ENCODE measurements at regions of chr20 and their contacts with region 1.

Region 1: GRCh38 chr20:6767536-6768227 is at the start of gene BMP2:
- DNase-seq: peak in 1 of 2 donors; percentile 72
- H3K4me3 ChIP-seq: peak within 1 kb of the TSS; percentile 86 to 87
- H3K27ac ChIP-seq: peak within 1 kb of the TSS; percentile 76 to 89
- H3K4me1 ChIP-seq: peaks cover 3 to 8% of the 10 kb centered on the region in 2 donors
- H3K27me3 ChIP-seq: no peaks in the 10 kb centered on the region
- CTCF ChIP-seq: no peak
- total RNA-seq, gene BMP2: 31.1 TPM

Region 2: GRCh38 chr20:6142348-6142993 is 625.2 kb before region 1 on chr20:
- intact Hi-C with region 1: loop called (anchors 5 kb)
- DNase-seq: no peak
- H3K4me3 ChIP-seq: no peak overlapping the region
- H3K27ac ChIP-seq: no peak overlapping the region
- H3K4me1 ChIP-seq: no peaks in the 10 kb centered on the region
- H3K27me3 ChIP-seq: no peaks in the 10 kb centered on the region
- CTCF ChIP-seq: peak in 2 of 3 experiments; percentile 83 to 87

Region 3: DNA sequence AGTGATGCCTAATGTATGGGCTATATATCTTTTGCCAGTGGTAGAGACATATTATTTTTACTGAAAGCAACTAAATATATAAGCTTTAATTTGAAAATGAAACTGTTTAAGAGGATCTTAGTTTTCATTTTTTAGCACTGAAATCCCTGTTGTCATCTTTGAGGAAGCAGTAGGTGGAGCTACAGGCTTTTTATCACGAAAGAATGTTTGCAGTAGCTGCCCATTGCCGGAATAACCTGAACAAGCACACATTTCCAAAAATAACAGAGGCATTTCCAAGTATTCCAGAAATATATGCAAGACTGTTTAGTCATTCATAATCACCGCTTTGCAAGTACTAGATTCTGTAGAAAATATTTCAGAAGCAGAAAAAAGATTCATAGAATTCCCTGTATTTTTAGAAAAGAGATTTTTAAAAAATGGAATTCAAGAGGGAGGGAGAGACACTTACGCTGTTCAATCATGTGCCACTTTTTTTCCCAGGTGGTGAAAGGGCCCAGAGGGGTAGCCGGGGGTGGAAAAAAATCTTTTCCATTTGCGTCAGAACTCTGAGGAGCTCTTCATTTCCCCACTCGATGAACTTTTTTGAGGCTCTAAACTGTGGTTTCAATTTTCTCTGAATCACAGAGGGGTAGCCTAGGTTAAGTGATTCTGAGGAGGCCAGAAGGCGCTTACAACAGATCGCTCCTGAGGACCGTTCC is 502.3 kb before region 1 on chr20:
- intact Hi-C with region 1: loop called (anchors 2 kb)
- DNase-seq: no peak
- H3K4me3 ChIP-seq: peak overlapping the region; percentile 25 to 43
- H3K27ac ChIP-seq: peak overlapping the region; percentile 45 to 65
- H3K4me1 ChIP-seq: peaks cover 0 to 7% of the 10 kb centered on the region in 2 donors
- H3K27me3 ChIP-seq: no peaks in the 10 kb centered on the region
- CTCF ChIP-seq: peak; percentile 33 to 49 (median 35)

Region 4: GRCh38 chr20:6704132-6704861 is 63.4 kb before region 1 on chr20:
- intact Hi-C with region 1: loop called (anchors 1 kb)
- DNase-seq: no peak
- H3K4me3 ChIP-seq: no peak overlapping the region
- H3K27ac ChIP-seq: peak overlapping the region; percentile 86 to 90
- H3K4me1 ChIP-seq: peaks cover 0 to 29% of the 10 kb centered on the region in 2 donors
- H3K27me3 ChIP-seq: no peaks in the 10 kb centered on the region
- CTCF ChIP-seq: no peak

Region 5: DNA sequence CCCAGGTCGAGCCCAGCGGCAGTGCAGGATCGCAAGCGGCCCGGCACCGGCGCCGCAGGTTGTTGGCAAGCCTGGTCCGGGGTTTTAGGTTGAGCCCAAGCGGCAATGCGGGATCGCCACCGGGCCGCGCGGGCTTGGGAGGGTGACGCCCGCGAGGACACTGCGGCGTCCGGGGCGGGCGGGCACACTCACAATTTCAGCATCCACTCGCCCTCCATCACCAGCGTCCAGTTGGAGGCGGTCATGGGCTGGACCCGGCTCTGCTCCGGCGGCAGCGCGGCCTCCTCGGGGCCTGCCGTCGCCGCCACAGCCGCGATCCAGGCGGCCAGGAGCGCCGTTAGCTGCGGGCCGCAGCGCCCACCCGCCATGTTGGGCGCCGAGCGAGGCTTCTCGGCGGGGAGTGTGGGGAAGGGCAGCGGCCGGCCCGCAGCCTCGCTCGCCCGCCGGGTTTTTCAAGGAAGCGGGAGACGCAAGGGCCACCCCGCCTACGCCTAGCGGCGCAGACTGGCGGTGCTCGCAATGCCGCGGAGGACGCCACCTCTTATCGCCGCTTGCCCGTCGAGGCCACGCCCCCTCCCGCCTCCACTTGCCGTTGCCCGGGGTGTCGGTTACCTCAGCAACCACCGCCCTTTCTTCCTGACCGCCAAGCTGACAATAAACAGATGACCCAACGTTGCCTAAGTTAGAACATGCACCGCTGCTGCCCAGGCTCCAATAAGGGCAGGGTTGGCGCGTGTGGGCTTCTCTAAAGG is 1251.7 kb after region 1 on chr20 and contains the start of gene TMX4:
- intact Hi-C with region 1: loop called (anchors 10 kb)
- DNase-seq: peak; percentile 93 to 98
- H3K4me3 ChIP-seq: peak within 1 kb of the TSS; percentile 74 to 79
- H3K27ac ChIP-seq: peak within 1 kb of the TSS; percentile 96 to 97
- H3K4me1 ChIP-seq: peaks cover 0 to 7% of the 10 kb centered on the region in 2 donors
- H3K27me3 ChIP-seq: no peaks in the 10 kb centered on the region
- CTCF ChIP-seq: peak in 2 of 3 experiments; percentile 25 to 64
- total RNA-seq, gene TMX4: 65.3 TPM